ENCODE measurements at regions of chrX and their contacts with region 1.

Region 1: GRCh38 chrX:136055651-136056221 is 70.5 kb downstream of the SLC9A6 start:
- DNase-seq: no peak
- H3K4me3 Mint-ChIP-seq: no peak overlapping the region
- H3K27ac Mint-ChIP-seq: no peak overlapping the region
- H3K4me1 Mint-ChIP-seq: peaks cover 20% of the 10 kb centered on the region
- H3K27me3 Mint-ChIP-seq: no peaks in the 10 kb centered on the region

Region 2: DNA sequence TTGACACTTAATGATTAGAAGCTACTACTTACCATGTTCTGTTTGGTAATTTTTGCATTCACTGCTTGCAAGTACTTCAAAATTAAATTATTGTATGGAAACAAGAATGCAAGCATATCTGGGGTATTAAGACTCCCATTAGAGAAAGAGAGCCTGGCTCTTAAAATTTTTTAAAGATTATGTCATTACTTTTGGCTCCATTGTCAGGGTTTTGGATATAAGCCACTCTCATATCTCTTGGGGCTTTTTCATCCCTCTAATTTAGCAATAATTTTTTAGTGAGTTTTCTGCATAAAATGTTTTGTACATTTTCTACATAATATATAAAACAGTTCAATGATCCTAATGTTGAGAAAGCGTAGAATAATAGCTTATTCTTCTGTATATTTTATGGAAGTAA is 21.1 kb before region 1 on chrX:
- CTCF ChIA-PET with region 1: interaction called, 3 read pairs
- POLR2A ChIA-PET with region 1: interaction called, 16 read pairs
- DNase-seq: no peak
- H3K4me3 Mint-ChIP-seq: no peak overlapping the region
- H3K27ac Mint-ChIP-seq: no peak overlapping the region
- H3K4me1 Mint-ChIP-seq: no peaks in the 10 kb centered on the region
- H3K27me3 Mint-ChIP-seq: no peaks in the 10 kb centered on the region

Measured in activated CD4-positive, alpha-beta T cell treated with anti-CD3 and anti-CD28 coated beads, Interleukin-2, amount 10 ng/mL, durations not matched to agents 7 days and 5 days (primary cell).